Psoas muscle (tissue), 8 donors: ENCODE measurements at regions of chr16 and their contacts with region 1.

Region 1: DNA sequence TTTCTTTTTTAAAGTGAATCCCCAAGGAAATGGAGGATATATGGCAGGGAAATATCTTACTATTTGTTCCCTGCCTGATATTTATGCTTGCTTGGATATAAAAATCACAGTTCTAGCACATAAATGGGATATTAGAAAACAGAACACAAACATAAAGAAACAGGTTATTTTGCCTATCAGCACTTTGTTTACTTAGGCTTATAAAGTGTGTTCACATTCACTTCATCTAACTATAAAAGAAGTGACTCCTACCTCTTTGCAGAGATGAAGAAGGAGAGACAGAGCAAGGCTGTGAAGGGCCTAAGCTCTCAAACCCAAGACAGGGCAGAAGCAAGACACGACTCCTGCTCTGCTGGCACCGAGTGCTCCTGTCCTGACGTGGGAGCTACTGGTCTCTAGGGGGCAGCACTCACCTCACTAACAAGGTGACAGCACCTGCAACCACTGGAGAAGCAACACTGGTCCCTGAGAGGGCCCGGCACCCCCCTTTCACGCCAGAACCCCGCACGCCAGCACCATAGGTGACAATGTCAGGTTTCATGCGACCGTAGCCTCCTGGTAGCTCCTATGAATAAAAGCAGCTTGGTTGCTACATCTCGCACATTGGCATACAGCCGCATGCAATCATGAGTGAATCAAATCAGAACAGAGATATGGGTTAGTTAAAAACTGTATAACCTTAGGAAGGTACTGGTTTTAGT is 32.0 kb downstream of the MBTPS1 start:
- DNase-seq: peak; percentile 41 to 72
- ATAC-seq: peak; percentile 59 to 83 (median 72)
- H3K4me3 ChIP-seq: no peak overlapping the region
- H3K27ac ChIP-seq: no peak overlapping the region
- H3K4me1 ChIP-seq: peaks cover 10% of the 10 kb centered on the region
- H3K27me3 ChIP-seq: no peaks in the 10 kb centered on the region
- CTCF ChIP-seq: peak; percentile 65

Region 2: DNA sequence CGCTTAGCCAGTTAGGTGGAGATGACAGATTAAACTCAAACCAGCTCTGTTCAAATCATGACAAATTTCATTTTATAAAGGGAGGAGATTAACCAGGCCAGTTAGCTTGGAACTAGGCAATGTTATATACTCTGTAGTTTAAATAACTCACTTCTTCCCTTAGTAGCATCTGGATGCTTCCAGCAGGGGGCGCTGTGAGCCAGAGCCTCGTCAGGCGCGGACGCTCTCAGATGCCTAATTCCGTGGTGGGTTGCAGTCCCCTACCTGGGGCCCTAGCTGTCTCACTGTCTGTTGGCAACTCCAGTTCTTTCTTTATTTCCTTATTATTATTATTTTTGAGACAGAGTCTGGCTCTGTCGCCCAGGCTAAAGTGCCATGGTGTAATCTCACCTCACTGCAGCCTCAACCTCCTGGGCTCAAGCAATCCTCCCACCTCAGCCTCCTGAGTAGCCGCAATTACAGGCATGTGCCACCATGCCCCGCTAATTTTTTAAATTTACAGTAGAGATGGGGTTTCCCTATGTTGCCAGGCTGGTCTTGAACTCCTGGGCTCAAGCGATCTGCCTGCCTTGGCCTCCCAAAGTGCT is 192.6 kb after region 1 on chr16:
- intact Hi-C with region 1: no loop called
- DNase-seq: peak; percentile 59 to 75
- ATAC-seq: peak in 1 of 4 donors; percentile 41
- H3K4me3 ChIP-seq: no peak overlapping the region
- H3K27ac ChIP-seq: no peak overlapping the region
- H3K4me1 ChIP-seq: no peaks in the 10 kb centered on the region
- H3K27me3 ChIP-seq: peaks cover 0 to 9% (median 3%) of the 10 kb centered on the region in 3 donors
- CTCF ChIP-seq: peak; percentile 74

Region 3: GRCh38 chr16:84484579-84485254 is 400.0 kb after region 1 on chr16:
- intact Hi-C with region 1: loop called in 1 of 2 experiments (anchors 2 kb)
- DNase-seq: peak in 1 of 2 donors; percentile 51
- ATAC-seq: peak; percentile 57 to 85 (median 77)
- H3K4me3 ChIP-seq: no peak overlapping the region
- H3K27ac ChIP-seq: no peak overlapping the region
- H3K4me1 ChIP-seq: peaks cover 6% of the 10 kb centered on the region
- H3K27me3 ChIP-seq: no peaks in the 10 kb centered on the region
- CTCF ChIP-seq: peak; percentile 74